Gastrocnemius medialis (tissue), 4 donors: ENCODE measurements at regions of chr1 and their contacts with region 1.

Region 1: GRCh38 chr1:86833461-86834215 is 80.3 kb downstream of the SELENOF start:
- DNase-seq: peak; percentile 41 to 66
- ATAC-seq: peak; percentile 96 to 97
- H3K4me3 ChIP-seq: no peak overlapping the region
- H3K27ac ChIP-seq: no peak overlapping the region
- H3K4me1 ChIP-seq: no peaks in the 10 kb centered on the region
- H3K27me3 ChIP-seq: no peaks in the 10 kb centered on the region
- CTCF ChIP-seq: peak; percentile 51 to 70 (median 64)
- POLR2A ChIP-seq: no peak

Region 2: GRCh38 chr1:86913896-86914634 is 80.4 kb after region 1 on chr1 and contains the start of gene SELENOF:
- in situ Hi-C with region 1: no loop called
- intact Hi-C with region 1: loop called (anchors 5 kb)
- DNase-seq: peak; percentile 98 to 100
- ATAC-seq: peak; percentile 97 to 98
- H3K4me3 ChIP-seq: peak within 1 kb of the TSS; percentile 76 to 99 (median 88)
- H3K27ac ChIP-seq: peak within 1 kb of the TSS; percentile 86 to 97 (median 90)
- H3K4me1 ChIP-seq: peaks cover 19 to 40% of the 10 kb centered on the region in 2 donors
- H3K27me3 ChIP-seq: no peaks in the 10 kb centered on the region
- CTCF ChIP-seq: peak in 1 of 5 experiments; percentile 23
- POLR2A ChIP-seq: peak; percentile 18 to 86
- total RNA-seq, gene SELENOF: 41.3 to 66.8 (median 47.2) TPM

Region 3: GRCh38 chr1:86933562-86934377 is 100.1 kb after region 1 on chr1:
- in situ Hi-C with region 1: no loop called
- intact Hi-C with region 1: no loop called
- DNase-seq: no peak
- ATAC-seq: no peak
- H3K4me3 ChIP-seq: no peak overlapping the region
- H3K27ac ChIP-seq: no peak overlapping the region
- H3K4me1 ChIP-seq: no peaks in the 10 kb centered on the region
- H3K27me3 ChIP-seq: no peaks in the 10 kb centered on the region
- CTCF ChIP-seq: no peak
- POLR2A ChIP-seq: no peak

Region 4: DNA sequence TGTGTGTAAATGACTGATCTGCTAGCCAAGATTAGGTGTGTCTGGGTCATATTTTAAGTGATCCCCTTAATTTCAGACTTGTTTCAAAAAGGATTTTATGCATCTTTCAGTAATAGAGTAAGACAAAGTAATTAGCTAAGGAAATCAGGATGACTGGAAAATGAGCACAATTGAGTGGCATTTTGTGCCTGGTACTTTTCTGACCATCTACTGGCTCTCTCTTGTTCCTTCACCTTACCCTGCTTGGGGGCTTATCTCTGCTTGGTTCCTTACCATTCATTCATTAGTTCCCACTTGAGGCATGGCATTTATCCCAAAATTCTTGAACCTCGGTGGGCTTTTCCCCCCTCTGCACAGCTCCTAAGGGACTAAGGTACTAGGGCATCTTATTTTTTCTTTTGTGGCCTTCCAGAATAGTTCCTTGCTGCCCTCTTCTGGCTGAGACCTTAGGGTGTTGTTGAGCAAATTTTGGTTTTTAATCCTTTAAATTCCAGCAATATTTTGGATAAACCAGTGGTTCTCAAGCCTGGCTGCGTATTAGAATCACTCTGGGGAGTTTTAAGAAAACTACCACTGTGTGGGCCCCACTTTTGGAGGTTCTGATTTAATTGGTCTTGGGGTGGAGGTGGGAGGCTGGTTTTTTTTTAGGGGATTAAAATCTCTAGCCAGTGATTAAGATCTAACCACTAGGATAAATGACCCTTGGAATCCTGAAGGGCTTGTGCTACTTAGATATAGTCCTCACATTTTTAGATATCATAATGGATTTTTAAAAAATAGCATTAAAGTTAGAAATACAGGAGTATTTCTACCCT is 131.6 kb after region 1 on chr1:
- in situ Hi-C with region 1: loop called (anchors 10 to 25 kb)
- intact Hi-C with region 1: loop called (anchors 1 kb)
- DNase-seq: no peak
- ATAC-seq: no peak
- H3K4me3 ChIP-seq: no peak overlapping the region
- H3K27ac ChIP-seq: no peak overlapping the region
- H3K4me1 ChIP-seq: no peaks in the 10 kb centered on the region
- H3K27me3 ChIP-seq: no peaks in the 10 kb centered on the region
- CTCF ChIP-seq: peak; percentile 34 to 69 (median 49)
- POLR2A ChIP-seq: no peak

Region 5: DNA sequence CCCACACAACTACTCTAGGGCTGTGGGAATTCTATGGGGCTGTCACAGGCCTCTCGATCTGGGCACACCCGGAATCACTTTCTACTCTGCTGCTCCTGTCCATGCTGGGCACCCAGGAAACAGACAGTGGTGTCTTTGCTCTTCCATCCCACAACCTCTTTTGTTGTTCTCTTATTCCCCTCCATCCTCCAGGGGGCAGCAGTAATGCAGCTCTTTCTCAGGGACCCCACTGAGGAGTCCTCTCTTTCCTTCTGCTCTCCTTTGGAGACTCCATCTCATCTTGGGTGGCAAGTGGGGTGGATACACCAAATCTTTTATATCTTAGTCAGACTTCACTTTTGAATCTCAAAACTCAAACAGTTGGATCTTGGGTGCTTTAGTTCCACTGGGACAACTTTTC is 287.1 kb after region 1 on chr1:
- in situ Hi-C with region 1: no loop called
- intact Hi-C with region 1: no loop called
- DNase-seq: no peak
- ATAC-seq: no peak
- H3K4me3 ChIP-seq: no peak overlapping the region
- H3K27ac ChIP-seq: no peak overlapping the region
- H3K4me1 ChIP-seq: no peaks in the 10 kb centered on the region
- H3K27me3 ChIP-seq: no peaks in the 10 kb centered on the region
- CTCF ChIP-seq: no peak
- POLR2A ChIP-seq: no peak